Heart left ventricle (tissue), 16 donors: ENCODE measurements at regions of chr19 and their contacts with region 1.

Region 1: GRCh38 chr19:58400916-58401839 is 5.7 kb downstream of the RNF225 start:
- DNase-seq: peak; percentile 99 to 100 (median 100)
- ATAC-seq: peak; percentile 98 to 100 (median 100)
- H3K4me3 ChIP-seq: peak overlapping the region; percentile 48 to 83 (median 64)
- H3K27ac ChIP-seq: peak overlapping the region in 9 of 12 donors; percentile 7 to 74 (median 60)
- H3K4me1 ChIP-seq: peaks cover 3 to 26% (median 13%) of the 10 kb centered on the region in 12 donors
- H3K27me3 ChIP-seq: peaks cover 5 to 15% (median 13%) of the 10 kb centered on the region in 9 donors
- CTCF ChIP-seq: peak in 3 of 12 donors; percentile 15 to 29 (median 24)
- POLR2A ChIP-seq: peak in 1 of 2 donors; percentile 52

Region 2: GRCh38 chr19:58380722-58381466 is 20.3 kb before region 1 on chr19 and contains the start of gene ZNF837:
- intact Hi-C with region 1: loop called in 1 of 10 experiments (anchors 1 kb)
- DNase-seq: peak; percentile 99 to 100 (median 99)
- ATAC-seq: peak; percentile 95 to 96 (median 96)
- H3K4me3 ChIP-seq: peak within 1 kb of the TSS; percentile 57 to 94 (median 83)
- H3K27ac ChIP-seq: peak within 1 kb of the TSS; percentile 85 to 98 (median 95)
- H3K4me1 ChIP-seq: peaks cover 2 to 33% (median 25%) of the 10 kb centered on the region in 12 donors
- H3K27me3 ChIP-seq: no peaks in the 10 kb centered on the region
- CTCF ChIP-seq: no peak
- POLR2A ChIP-seq: peak in 1 of 2 donors; percentile 75
- total RNA-seq, gene ZNF837: 0.17 to 0.75 (median 0.63) TPM in 7 of 9 donors, not detected in the others

Region 3: GRCh38 chr19:58386576-58387337 is 14.4 kb before region 1 on chr19 and contains the start of gene RPS5:
- intact Hi-C with region 1: loop called in 1 of 10 experiments (anchors 1 kb)
- DNase-seq: peak; percentile 97
- ATAC-seq: peak; percentile 95 to 97 (median 96)
- H3K4me3 ChIP-seq: peak within 1 kb of the TSS; percentile 60 to 99 (median 77)
- H3K27ac ChIP-seq: peak within 1 kb of the TSS; percentile 81 to 99 (median 97)
- H3K4me1 ChIP-seq: peaks cover 5 to 42% (median 29%) of the 10 kb centered on the region in 12 donors
- H3K27me3 ChIP-seq: no peaks in the 10 kb centered on the region
- CTCF ChIP-seq: no peak
- POLR2A ChIP-seq: peak in 1 of 2 donors; percentile 67
- total RNA-seq, gene RPS5: 346 to 753 (median 485) TPM

Region 4: DNA sequence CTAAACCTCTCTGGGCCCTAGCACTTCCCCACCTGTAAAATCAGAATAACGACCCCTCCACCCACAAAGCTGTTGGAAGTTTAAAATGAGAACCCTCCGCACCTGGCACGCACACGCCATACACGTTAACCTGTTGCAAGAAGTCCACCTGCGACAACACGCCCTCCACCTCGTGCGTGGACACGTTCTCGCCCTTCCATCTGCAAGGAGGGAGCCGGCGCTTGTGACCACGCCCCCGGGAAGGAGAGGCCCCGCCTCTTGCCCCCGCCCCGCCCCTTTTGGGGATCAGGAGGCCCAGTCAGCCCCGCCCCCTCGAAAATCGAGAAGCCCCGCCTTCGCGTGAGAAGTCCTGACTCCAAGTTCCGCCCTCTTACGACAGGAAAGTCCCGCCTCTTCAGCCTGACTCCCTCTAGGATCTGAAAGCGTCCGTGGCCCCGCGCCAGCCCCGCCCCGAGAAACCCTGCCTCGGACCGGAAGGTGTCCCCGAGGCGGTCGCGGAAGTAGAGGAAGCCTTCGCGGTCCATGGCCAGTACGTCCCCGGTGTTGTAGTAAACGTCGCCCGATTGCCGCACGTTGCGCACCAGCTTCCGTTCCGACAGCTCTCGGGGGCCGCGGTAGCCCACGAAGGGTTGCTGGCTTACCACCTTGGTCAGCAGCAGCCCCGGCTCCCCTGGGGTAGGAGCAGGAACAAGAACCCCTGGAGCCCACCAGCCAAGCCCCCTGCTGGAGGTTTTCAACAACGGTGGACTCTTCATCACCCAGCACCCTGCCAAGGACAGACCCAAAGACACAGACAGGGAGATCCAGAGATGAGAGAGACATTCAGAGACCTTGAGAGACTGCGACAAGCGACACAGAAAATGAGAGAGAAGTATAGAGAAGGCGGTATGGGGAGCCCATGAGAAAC is 98.1 kb after region 1 on chr19:
- intact Hi-C with region 1: no loop called
- DNase-seq: peak; percentile 99 to 100 (median 100)
- ATAC-seq: peak; percentile 97 to 99 (median 98)
- H3K4me3 ChIP-seq: peak overlapping the region; percentile 13 to 79 (median 62)
- H3K27ac ChIP-seq: peak overlapping the region; percentile 30 to 88 (median 82)
- H3K4me1 ChIP-seq: peaks cover 0 to 27% (median 22%) of the 10 kb centered on the region in 12 donors
- H3K27me3 ChIP-seq: no peaks in the 10 kb centered on the region
- CTCF ChIP-seq: peak in 6 of 12 donors; percentile 8 to 42 (median 26)
- POLR2A ChIP-seq: peak in 1 of 2 donors; percentile 65